ENCODE measurements at regions of chr21 and their contacts with region 1.

Region 1: DNA sequence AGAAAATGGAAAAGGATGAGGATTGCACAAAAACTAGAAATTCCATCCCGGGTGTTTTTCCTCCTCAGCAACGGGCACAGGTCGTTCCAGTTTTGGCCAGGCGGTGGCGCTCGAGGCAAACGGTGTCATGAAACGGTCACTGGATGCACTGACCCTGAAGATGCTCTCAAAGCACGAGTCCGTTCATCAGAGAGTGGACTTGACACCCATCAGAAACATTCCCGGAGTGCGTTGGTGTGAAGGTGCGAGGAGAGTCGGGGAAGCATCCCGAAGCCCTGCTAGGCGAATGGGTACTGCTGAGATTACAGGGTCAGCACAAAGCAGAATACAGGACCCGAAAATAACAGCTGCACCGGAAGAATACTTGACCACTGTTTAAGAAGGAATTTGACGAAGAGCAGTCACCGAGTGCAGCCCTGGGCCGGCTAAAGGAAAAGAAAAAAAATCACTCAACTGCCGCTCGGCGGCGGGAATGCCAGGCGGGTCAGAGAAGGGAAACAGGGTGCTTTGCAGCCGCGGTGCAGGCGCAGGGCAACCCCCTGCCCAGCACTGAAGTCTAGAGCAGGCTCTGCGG is 71.7 kb upstream of the ETS2 start:
- DNase-seq: peak; percentile 93 to 98
- ATAC-seq: peak; percentile 94
- H3K4me3 ChIP-seq: peak overlapping the region in 1 of 2 donors; percentile 20
- H3K27ac ChIP-seq: peak overlapping the region; percentile 10 to 50
- H3K4me1 ChIP-seq: no peaks in the 10 kb centered on the region
- H3K27me3 ChIP-seq: no peaks in the 10 kb centered on the region

Region 2: GRCh38 chr21:38805328-38806152 is 71.5 kb after region 1 on chr21 and contains the start of gene ETS2:
- intact Hi-C with region 1: loop called (anchors 1 to 5 kb)
- DNase-seq: peak; percentile 96 to 97
- ATAC-seq: peak; percentile 93
- H3K4me3 ChIP-seq: peak within 1 kb of the TSS; percentile 96 to 99
- H3K27ac ChIP-seq: peak within 1 kb of the TSS; percentile 93
- H3K4me1 ChIP-seq: peaks cover 2 to 9% of the 10 kb centered on the region in 2 donors
- H3K27me3 ChIP-seq: no peaks in the 10 kb centered on the region
- total RNA-seq, gene ETS2: 145 to 232 TPM

Region 3: GRCh38 chr21:38903690-38904139 is 169.7 kb after region 1 on chr21:
- intact Hi-C with region 1: loop called in 1 of 2 experiments (anchors 10 kb)
- DNase-seq: peak in 1 of 2 donors; percentile 71
- ATAC-seq: peak; percentile 47
- H3K4me3 ChIP-seq: no peak overlapping the region
- H3K27ac ChIP-seq: peak overlapping the region; percentile 87
- H3K4me1 ChIP-seq: no peaks in the 10 kb centered on the region
- H3K27me3 ChIP-seq: no peaks in the 10 kb centered on the region

Region 4: DNA sequence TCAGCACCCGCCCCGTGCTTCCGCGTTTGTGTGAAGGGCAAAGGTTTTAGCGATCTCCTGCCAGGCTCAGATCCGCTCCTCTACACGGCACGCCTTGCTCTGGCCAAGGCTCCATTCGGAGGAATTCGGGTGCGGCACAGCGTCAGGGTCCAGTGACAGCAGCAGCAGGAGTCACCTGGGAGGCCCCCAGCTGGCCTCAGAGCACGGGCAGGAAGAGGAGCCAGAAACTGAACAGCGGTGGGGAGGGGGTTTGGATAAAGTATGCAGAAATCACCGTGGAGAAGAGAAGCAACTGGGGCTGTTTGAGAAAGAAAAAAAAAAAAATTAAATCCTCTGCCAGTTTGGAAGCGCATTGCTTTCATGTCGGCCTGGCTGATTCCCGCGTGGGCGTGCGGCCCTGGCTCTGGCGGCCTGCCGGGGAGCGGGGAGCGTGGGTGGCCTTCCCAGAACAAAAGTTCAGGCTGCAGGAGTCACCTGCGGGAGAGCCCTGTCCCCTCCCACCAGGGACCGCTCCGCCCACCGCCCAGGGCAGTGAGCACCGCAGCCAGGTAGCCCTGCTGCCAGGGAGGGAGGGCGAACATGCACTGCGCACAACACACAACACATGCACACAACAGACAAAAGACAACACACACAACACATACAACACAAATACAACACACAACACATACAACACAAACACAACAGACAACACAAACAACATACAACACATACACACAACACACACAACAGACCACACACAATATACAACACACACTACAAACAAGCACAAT is 179.2 kb after region 1 on chr21:
- intact Hi-C with region 1: loop called (anchors 10 kb)
- DNase-seq: peak; percentile 75 to 93
- ATAC-seq: peak; percentile 79
- H3K4me3 ChIP-seq: no peak overlapping the region
- H3K27ac ChIP-seq: peak overlapping the region in 1 of 2 donors; percentile 30
- H3K4me1 ChIP-seq: peaks cover 0 to 3% of the 10 kb centered on the region in 2 donors
- H3K27me3 ChIP-seq: no peaks in the 10 kb centered on the region

Region 5: GRCh38 chr21:38989745-38990423 is 255.8 kb after region 1 on chr21:
- intact Hi-C with region 1: loop called in 1 of 2 experiments (anchors 10 kb)
- DNase-seq: no peak
- ATAC-seq: no peak
- H3K4me3 ChIP-seq: no peak overlapping the region
- H3K27ac ChIP-seq: no peak overlapping the region
- H3K4me1 ChIP-seq: peaks cover 2 to 4% of the 10 kb centered on the region in 2 donors
- H3K27me3 ChIP-seq: no peaks in the 10 kb centered on the region

Region 6: GRCh38 chr21:39125752-39126485 is 391.9 kb after region 1 on chr21:
- intact Hi-C with region 1: loop called in 1 of 2 experiments (anchors 2 kb)
- DNase-seq: no peak
- ATAC-seq: peak; percentile 88
- H3K4me3 ChIP-seq: no peak overlapping the region
- H3K27ac ChIP-seq: no peak overlapping the region
- H3K4me1 ChIP-seq: no peaks in the 10 kb centered on the region
- H3K27me3 ChIP-seq: no peaks in the 10 kb centered on the region

Region 7: DNA sequence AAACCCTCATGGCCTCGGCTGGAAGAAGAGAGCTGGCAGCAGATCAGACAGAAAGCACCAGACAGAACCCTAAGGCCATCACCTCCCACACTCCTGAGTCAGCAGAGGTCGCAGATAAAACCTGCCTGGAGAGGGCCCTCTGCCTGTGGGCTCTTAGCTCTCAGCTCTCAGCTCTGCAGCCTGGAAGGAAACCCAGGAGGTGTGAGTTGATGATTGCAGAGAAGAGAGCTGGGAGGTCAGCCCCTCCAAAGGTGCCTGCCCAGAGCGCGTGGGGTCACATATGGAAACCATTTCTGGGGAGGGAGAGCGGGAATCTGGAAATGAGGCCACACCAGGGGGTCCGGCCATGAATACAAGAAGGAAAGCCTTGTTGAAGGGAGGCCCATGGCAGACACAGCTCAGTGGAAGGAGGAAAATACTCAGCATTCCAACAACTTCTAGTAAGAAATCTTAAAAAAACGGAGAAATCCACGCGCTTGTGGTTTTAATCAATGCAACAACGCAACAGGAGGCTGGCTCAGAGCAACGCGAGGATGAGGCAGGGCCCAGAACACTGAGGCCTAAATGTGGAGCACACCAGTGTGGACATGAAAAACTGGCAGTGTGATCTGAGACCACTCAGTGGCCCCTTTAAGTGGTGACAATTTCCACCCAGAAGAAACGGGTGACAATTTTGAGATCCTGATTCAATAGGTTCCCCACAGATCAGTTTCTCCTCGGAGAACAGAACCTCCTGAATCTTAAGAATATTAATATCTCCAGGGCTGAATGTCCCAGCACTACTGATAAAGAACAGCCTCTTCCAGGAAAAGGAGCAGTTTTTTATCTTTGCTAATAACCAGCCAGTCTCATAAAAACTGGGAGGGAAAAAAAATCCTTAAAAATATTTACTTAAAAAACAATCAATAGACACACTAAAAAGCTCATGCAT is 403.5 kb after region 1 on chr21:
- intact Hi-C with region 1: loop called in 1 of 2 experiments (anchors 5 kb)
- DNase-seq: no peak
- ATAC-seq: peak; percentile 41
- H3K4me3 ChIP-seq: no peak overlapping the region
- H3K27ac ChIP-seq: no peak overlapping the region
- H3K4me1 ChIP-seq: no peaks in the 10 kb centered on the region
- H3K27me3 ChIP-seq: no peaks in the 10 kb centered on the region

Measured in aorta (tissue), 5 donors.